ENCODE measurements at regions of chr10 and their contacts with region 1.

Region 1: DNA sequence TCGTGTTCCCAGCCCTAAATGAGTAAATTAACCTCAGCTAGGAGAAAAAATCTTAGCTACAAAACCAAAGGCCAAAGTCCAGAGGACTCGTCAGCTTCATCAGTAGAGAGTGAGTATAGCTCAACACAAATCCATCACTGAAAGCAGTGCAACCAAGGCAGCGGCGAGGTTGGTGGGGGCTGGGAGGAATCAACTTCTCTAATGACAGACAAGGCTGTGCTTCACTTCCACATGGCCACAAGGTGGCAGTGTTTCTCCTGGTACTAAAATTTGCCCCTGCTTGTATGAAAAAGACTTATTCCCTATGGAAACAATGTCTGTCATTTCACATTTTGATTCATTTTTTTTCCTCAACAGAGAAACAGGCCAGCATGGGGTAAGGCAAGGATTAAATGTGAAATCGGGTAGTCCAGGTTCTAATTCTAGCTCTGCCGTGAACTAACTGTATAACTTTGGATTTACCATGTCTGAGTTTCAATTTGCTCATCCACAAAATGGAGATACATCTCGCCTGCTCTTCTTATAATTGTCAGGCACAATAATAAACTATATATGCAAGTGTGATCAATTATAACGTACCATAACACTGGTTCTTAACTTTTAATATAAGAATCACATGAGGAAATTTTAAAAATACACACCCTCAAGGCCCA is 39.3 kb downstream of the FAS start:
- DNase-seq: peak; percentile 81
- H3K4me3 Mint-ChIP-seq: no peak overlapping the region
- H3K27ac Mint-ChIP-seq: no peak overlapping the region
- H3K4me1 Mint-ChIP-seq: peaks cover 16% of the 10 kb centered on the region
- H3K27me3 Mint-ChIP-seq: no peaks in the 10 kb centered on the region

Region 2: GRCh38 chr10:89207181-89207800 is 177.4 kb after region 1 on chr10 and contains the start of gene CH25H:
- CTCF ChIA-PET with region 1: interaction called, 10 read pairs
- POLR2A ChIA-PET with region 1: interaction called, 3 read pairs
- DNase-seq: peak; percentile 39
- H3K4me3 Mint-ChIP-seq: peak within 1 kb of the TSS; percentile 70
- H3K27ac Mint-ChIP-seq: no peak within 1 kb of the TSS
- H3K4me1 Mint-ChIP-seq: peaks cover 18% of the 10 kb centered on the region
- H3K27me3 Mint-ChIP-seq: peaks cover 45% of the 10 kb centered on the region
- total RNA-seq, gene CH25H: not detected

Region 3: GRCh38 chr10:89217057-89217990 is 187.4 kb after region 1 on chr10:
- CTCF ChIA-PET with region 1: interaction called, 12 read pairs
- POLR2A ChIA-PET with region 1: no interaction called
- DNase-seq: peak; percentile 75
- H3K4me3 Mint-ChIP-seq: no peak overlapping the region
- H3K27ac Mint-ChIP-seq: peak overlapping the region; percentile 60
- H3K4me1 Mint-ChIP-seq: peaks cover 14% of the 10 kb centered on the region
- H3K27me3 Mint-ChIP-seq: peaks cover 2% of the 10 kb centered on the region

Measured in activated CD4-positive, alpha-beta T cell treated with anti-CD3 and anti-CD28 coated beads, Interleukin-2, amount 10 ng/mL, durations not matched to agents 7 days and 5 days (primary cell).